ENCODE measurements at regions of chr20 and their contacts with region 1.

Region 1: GRCh38 chr20:58650776-58651558 is at the start of gene STX16:
- DNase-seq: peak; percentile 88

Region 2: GRCh38 chr20:58420798-58421496 is 230.0 kb before region 1 on chr20:
- CTCF ChIA-PET with region 1: no interaction called
- POLR2A ChIA-PET with region 1: no interaction called
- DNase-seq: no peak

Region 3: DNA sequence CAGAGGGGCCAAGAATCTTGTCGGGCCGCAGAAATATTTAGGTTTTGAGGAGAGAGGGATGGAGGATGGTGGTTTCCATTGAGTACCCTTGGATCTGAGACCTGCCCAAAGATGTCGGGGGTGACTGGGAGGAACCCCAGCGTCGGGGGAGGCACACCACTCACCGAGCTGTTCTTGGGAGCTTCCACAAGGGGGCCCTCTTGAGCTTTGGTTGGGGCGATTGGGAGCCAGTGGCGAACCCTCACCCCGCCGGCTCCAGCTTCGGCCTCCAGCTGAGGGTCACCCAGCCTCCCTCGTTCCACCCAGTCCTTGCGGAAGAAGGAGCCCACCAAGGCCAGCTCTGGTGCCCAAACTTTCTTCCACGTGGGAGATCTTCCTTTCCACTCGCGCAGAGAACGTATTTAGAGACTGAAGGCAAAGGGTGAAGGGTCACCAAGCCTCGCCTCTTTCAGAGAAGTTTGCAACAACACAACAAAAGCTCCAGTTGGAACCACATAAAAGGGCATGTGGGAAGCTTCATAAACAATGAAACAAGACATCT is 169.4 kb before region 1 on chr20:
- CTCF ChIA-PET with region 1: interaction called, 9 read pairs
- POLR2A ChIA-PET with region 1: interaction called, 23 read pairs
- DNase-seq: peak; percentile 56

Region 4: GRCh38 chr20:58839474-58839874 is 188.5 kb after region 1 on chr20:
- CTCF ChIA-PET with region 1: no interaction called
- POLR2A ChIA-PET with region 1: interaction called, 10 read pairs
- DNase-seq: peak; percentile 44

Measured in HEK293T (cell line).